B cell (primary cell): ENCODE measurements at regions of chr17 and their contacts with region 1.

Region 1: DNA sequence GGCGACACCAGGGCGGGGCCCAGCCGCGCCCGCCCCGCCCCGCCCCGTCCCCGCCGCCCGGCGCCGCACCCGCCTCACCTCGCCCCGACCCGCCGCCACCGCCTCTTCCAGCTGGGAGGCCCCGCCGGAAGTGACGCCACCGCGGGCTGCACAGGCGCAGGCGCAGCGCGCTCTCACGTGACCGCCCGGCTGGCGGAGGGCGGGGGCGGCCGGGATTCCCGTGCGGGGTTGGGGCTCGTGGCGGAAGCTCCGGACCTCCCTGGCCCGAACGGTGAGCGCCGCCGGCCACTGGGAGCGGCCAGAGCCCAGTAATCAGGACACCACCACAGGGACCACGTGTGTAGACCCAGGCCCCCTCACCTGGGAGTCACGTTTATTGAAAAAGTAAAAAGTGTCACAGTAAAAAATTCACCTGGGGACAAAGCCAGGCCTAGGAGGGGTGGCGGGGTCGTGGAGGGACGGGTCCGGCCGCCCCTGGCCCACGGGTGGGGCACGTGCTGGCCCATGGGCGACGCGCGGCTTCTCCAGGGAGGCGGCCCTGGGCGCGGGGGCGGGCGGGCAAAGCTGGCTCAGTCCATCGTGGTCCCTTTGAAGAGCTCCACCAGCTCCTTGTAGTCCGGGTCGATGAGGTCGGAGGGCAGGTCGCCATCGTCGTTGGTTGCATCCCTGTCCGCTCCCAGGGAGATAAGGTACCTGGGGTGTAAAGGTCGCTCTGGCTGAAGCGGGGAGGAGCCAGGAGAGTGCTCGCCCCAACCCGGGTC is at the start of gene MCRIP1:
- DNase-seq: peak; percentile 96
- ATAC-seq: peak; percentile 85
- H3K4me3 ChIP-seq: peak within 1 kb of the TSS; percentile 21 to 80 (median 78)
- H3K4me3 Mint-ChIP-seq: peak within 1 kb of the TSS; percentile 97
- H3K27ac ChIP-seq: peak within 1 kb of the TSS; percentile 85 to 98
- H3K27ac Mint-ChIP-seq: peak within 1 kb of the TSS; percentile 95
- H3K4me1 ChIP-seq: peaks cover 18 to 20% of the 10 kb centered on the region in 2 donors
- H3K4me1 Mint-ChIP-seq: peaks cover 23% of the 10 kb centered on the region
- H3K27me3 ChIP-seq: no peaks in the 10 kb centered on the region
- H3K27me3 Mint-ChIP-seq: no peaks in the 10 kb centered on the region
- CTCF ChIP-seq: no peak
- total RNA-seq, gene MCRIP1: 69.7 and 74.3 TPM in 2 replicates

Region 2: DNA sequence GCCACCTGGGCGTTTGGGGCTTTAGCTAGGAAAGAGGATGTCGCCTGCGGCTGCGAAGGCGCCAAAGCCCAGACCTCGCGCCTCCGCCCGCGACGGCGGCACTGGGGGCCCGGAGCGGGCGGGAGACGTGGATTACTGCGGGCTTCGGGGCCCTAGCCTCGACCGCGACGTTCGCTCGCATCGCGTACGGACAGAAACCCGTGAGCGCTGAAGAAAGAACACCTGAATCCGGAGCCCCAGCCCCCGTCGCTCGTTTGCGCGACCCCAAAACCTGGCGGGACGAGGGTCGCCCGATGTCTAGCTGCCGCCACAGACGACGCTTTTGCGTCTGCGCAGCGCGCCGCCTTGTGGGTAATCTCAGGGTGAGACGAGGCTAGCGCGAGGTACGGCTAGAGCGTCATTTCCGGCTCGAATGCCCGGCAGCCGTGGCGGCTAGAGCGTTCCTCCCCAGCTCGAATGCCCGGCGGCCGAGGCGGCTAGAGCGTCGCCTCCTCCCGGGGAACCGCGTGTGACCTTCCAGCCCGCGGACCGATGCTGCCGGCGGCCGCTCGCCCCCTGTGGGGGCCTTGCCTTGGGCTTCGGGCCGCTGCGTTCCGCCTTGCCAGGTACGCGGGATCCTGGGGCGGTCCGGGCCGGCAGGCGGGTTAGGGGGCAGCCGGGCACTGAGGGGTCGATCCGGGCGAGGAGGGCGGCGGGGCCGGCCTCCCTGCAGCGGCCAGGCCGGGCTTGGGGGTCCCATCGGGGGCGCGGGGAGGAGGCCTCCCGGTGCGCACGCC is 130.2 kb before region 1 on chr17 and contains the start of gene MRPL12:
- CTCF ChIA-PET with region 1: no interaction called
- POLR2A ChIA-PET with region 1: interaction called, 3 read pairs
- intact Hi-C with region 1: loop called (anchors 1 kb)
- DNase-seq: peak; percentile 94
- ATAC-seq: peak; percentile 95
- H3K4me3 ChIP-seq: peak within 1 kb of the TSS; percentile 45 to 98 (median 68)
- H3K4me3 Mint-ChIP-seq: peak within 1 kb of the TSS; percentile 90
- H3K27ac ChIP-seq: peak within 1 kb of the TSS; percentile 57 to 97
- H3K27ac Mint-ChIP-seq: peak within 1 kb of the TSS; percentile 91
- H3K4me1 ChIP-seq: peaks cover 24 to 32% of the 10 kb centered on the region in 2 donors
- H3K4me1 Mint-ChIP-seq: peaks cover 33% of the 10 kb centered on the region
- H3K27me3 ChIP-seq: no peaks in the 10 kb centered on the region
- H3K27me3 Mint-ChIP-seq: no peaks in the 10 kb centered on the region
- CTCF ChIP-seq: peak; percentile 36
- total RNA-seq, gene MRPL12: 23.8 and 24.1 TPM in 2 replicates

Region 3: GRCh38 chr17:81871387-81872230 is 38.3 kb after region 1 on chr17:
- CTCF ChIA-PET with region 1: interaction called, 4 read pairs
- POLR2A ChIA-PET with region 1: interaction called, 7 read pairs
- intact Hi-C with region 1: loop called (anchors 1 kb)
- DNase-seq: peak; percentile 96
- ATAC-seq: peak; percentile 2
- H3K4me3 ChIP-seq: peak overlapping the region; percentile 27 to 90 (median 84)
- H3K4me3 Mint-ChIP-seq: peak overlapping the region; percentile 89
- H3K27ac ChIP-seq: peak overlapping the region; percentile 90 to 99
- H3K27ac Mint-ChIP-seq: peak overlapping the region; percentile 98
- H3K4me1 ChIP-seq: peaks cover 22 to 39% of the 10 kb centered on the region in 2 donors
- H3K4me1 Mint-ChIP-seq: peaks cover 32% of the 10 kb centered on the region
- H3K27me3 ChIP-seq: no peaks in the 10 kb centered on the region
- H3K27me3 Mint-ChIP-seq: no peaks in the 10 kb centered on the region
- CTCF ChIP-seq: peak; percentile 50